ENCODE measurements at regions of chr18 and their contacts with region 1.

Region 1: DNA sequence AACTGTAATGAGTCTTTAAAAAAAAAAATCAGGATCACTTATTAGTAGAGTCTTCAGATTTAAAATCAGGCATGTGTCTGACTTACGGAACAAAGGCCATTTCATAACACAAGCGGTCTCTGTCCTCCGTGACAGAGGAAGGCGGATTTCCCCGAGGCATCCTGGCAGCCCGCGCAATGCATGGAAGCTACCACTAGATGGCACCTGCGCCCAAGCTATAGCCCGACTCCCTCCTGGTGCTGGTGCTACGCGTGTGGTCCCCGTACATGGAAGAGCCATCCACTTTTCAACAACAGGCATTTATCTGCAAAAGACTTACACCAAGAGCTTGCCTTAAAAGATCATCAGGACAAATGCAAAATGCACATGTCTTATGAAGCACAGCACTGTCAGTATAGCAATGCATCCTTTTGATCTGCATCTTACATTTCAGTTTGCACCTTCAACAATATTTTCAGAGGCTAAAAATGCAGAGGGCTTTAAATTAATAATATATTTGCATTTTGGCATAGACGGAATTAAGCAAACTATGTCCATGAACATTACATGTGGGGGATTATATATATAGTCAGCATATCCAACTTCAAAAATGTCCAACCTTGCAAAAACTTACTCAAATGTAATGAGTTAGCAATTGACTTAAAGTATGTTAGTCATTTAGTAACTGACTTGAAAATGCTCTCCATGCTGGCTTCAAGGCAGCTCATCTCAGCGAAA is 96.0 kb downstream of the ZNF516 start:
- DNase-seq: peak; percentile 77
- ATAC-seq: peak; percentile 76
- H3K4me3 Mint-ChIP-seq: no peak overlapping the region
- H3K27ac Mint-ChIP-seq: no peak overlapping the region
- H3K4me1 Mint-ChIP-seq: peaks cover 2% of the 10 kb centered on the region
- H3K27me3 Mint-ChIP-seq: peaks cover 25% of the 10 kb centered on the region

Region 2: GRCh38 chr18:76686737-76687262 is 287.7 kb after region 1 on chr18:
- CTCF ChIA-PET with region 1: interaction called, 16 read pairs
- DNase-seq: peak; percentile 43
- ATAC-seq: peak; percentile 69
- H3K4me3 Mint-ChIP-seq: no peak overlapping the region
- H3K27ac Mint-ChIP-seq: peak overlapping the region; percentile 73
- H3K4me1 Mint-ChIP-seq: peaks cover 18% of the 10 kb centered on the region
- H3K27me3 Mint-ChIP-seq: peaks cover 54% of the 10 kb centered on the region

Region 3: GRCh38 chr18:76721207-76721996 is 322.3 kb after region 1 on chr18:
- CTCF ChIA-PET with region 1: interaction called, 10 read pairs
- DNase-seq: peak; percentile 93
- ATAC-seq: peak; percentile 96
- H3K4me3 Mint-ChIP-seq: peak overlapping the region; percentile 65
- H3K27ac Mint-ChIP-seq: peak overlapping the region; percentile 93
- H3K4me1 Mint-ChIP-seq: peaks cover 42% of the 10 kb centered on the region
- H3K27me3 Mint-ChIP-seq: peaks cover 23% of the 10 kb centered on the region

Measured in activated CD8-positive, alpha-beta memory T cell treated with anti-CD3 and anti-CD28 coated beads, Interleukin-2, amount 10 ng/mL, durations not matched to agents 7 days and 5 days (primary cell).